IMR-90 (cell line): ENCODE measurements at regions of chr3 and their contacts with region 1.

Region 1: DNA sequence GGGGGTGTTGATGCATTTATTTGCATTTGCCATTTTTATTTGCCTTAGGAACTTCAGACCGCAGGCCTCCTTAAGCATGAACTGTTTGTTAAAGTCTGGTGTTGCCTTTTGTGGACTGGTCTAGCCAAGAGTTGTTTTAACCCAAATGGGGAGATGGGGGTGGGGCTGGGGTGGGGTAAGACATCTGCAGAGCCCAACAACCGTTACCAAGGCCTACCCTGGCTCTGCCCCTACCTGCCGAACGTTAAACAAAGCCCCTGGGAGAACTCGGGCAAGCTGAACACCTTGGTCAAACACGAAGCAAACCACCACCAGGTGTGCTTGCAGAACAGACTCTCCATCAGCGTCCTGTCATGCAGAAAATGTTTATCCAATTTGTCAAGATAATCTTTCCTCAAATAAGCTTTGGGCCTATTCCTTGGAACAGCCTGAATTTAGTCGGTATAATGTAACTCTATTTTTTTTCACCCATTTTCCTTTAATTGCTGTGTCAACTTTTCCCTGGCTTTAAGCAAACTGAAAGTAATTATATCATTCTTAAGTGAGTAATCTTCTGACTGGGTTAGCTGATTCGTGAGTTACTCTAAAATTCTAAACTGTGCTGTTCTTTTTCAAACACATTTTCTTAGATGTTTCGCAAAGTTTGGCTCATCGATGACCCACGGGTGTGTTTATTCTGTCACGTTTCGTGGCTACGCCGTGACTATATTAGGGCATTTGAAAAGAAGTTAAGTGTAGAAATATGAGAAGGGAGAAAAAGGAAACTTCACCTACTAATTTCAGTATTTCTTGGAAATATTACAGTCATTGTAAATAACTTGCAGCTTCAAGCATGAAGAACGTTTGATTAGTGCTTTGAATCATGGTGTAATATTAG is 127.6 kb downstream of the SOX2 start:
- DNase-seq: no peak
- ATAC-seq: no peak
- H3K4me3 ChIP-seq: no peak overlapping the region
- H3K27ac ChIP-seq: no peak overlapping the region
- H3K4me1 ChIP-seq: no peaks in the 10 kb centered on the region
- H3K27me3 ChIP-seq: no peaks in the 10 kb centered on the region
- CTCF ChIP-seq: no peak
- POLR2A ChIP-seq: no peak
- RAD21 ChIP-seq: no peak

Region 2: GRCh38 chr3:182671942-182672341 is 832.7 kb after region 1 on chr3:
- CTCF ChIA-PET with region 1: no interaction called
- POLR2A ChIA-PET with region 1: interaction called, 15 read pairs
- dilution Hi-C with region 1: no loop called
- in situ Hi-C with region 1: no loop called
- intact Hi-C with region 1: no loop called
- DNase-seq: peak; percentile 3
- ATAC-seq: no peak
- H3K4me3 ChIP-seq: no peak overlapping the region
- H3K27ac ChIP-seq: no peak overlapping the region
- H3K4me1 ChIP-seq: no peaks in the 10 kb centered on the region
- H3K27me3 ChIP-seq: no peaks in the 10 kb centered on the region
- CTCF ChIP-seq: no peak
- POLR2A ChIP-seq: no peak
- RAD21 ChIP-seq: no peak